Mucosa of descending colon (tissue), 3 donors: ENCODE measurements at regions of chr11 and their contacts with region 1.

Region 1: DNA sequence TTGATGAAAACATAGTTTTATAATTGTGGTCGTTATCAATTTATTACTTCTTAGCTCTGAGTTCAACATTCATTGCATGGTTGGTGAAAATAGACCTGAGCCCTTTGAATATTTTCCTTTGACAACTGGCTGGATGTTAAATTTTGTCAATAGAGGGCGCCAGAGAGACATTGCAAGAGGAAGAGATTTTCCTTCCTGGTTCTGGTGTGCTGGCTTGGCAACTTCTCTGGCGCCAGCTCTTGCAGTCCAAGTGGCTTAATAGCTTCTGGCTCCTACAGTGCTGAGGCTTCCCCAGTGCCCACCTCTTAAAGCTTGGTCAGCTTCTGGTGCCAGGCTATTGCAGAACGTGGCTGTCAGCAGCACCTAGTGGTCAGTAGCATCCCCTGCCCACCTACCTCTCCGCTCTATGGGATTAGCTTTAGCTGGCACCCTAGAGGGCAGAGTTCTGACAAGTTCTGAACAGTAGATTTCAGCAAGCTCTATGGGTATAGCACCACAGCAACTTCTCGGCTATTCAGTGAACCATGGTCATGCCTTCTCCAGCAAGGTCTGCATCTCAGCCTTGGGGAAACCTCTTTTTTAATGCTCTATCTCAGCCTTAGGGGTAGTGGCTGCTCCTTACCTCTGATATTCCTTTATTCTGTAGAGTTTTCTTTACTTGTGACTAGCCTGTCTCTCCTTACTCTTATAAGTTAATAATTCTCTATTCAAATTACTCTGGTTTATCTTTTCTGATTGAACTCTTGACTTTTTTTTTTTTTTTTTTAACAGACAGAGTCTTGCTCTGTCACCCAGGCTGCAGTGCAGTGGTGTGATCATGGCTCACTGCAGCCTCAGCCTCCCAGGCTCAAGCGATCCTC is 59.4 kb downstream of the ACER3 start:
- DNase-seq: peak; percentile 72 to 93 (median 76)
- ATAC-seq: peak; percentile 96
- H3K4me3 ChIP-seq: no peak overlapping the region
- H3K4me1 ChIP-seq: peaks cover 23% of the 10 kb centered on the region
- CTCF ChIP-seq: peak; percentile 61

Region 2: GRCh38 chr11:76734456-76735420 is 185.4 kb before region 1 on chr11:
- intact Hi-C with region 1: loop called in 1 of 2 experiments (anchors 10 kb)
- DNase-seq: no peak
- ATAC-seq: no peak
- H3K4me3 ChIP-seq: no peak overlapping the region
- H3K4me1 ChIP-seq: no peaks in the 10 kb centered on the region
- CTCF ChIP-seq: no peak

Region 3: DNA sequence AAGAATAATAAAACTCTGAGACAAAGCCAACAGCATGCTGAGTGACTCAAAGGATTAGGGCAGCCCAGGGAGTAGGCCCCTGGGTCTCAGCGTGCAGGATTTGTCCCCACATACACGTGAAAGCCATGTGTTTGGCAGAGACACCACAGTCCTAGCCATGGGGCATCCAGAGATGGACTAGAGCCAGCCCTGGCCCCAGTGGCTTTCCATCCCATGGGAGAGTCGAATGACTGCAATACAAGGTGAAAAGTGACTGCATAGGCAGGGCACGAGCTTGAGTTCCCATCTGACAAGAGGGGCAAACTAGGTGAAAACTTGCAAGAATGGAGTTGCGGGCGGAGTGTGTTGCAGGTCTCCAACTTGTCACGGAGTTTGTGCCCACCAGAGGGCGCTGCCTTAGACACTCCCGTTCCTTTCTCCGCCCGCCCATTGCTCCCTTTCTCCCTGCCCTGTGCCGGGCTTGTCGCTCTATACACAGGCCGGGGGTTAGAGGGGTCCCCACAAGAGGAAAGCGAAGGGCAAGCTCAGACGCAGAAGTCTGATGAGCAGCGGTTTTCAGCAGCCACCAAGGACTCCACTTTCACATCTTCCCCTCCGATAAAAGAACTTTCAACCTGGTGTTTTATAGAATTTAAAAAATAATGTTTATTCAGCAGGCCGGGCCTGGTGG is 112.8 kb before region 1 on chr11:
- intact Hi-C with region 1: loop called (anchors 5 kb)
- DNase-seq: peak; percentile 83 to 97 (median 88)
- ATAC-seq: peak; percentile 89
- H3K4me3 ChIP-seq: no peak overlapping the region
- H3K4me1 ChIP-seq: no peaks in the 10 kb centered on the region
- CTCF ChIP-seq: peak; percentile 67

Region 4: DNA sequence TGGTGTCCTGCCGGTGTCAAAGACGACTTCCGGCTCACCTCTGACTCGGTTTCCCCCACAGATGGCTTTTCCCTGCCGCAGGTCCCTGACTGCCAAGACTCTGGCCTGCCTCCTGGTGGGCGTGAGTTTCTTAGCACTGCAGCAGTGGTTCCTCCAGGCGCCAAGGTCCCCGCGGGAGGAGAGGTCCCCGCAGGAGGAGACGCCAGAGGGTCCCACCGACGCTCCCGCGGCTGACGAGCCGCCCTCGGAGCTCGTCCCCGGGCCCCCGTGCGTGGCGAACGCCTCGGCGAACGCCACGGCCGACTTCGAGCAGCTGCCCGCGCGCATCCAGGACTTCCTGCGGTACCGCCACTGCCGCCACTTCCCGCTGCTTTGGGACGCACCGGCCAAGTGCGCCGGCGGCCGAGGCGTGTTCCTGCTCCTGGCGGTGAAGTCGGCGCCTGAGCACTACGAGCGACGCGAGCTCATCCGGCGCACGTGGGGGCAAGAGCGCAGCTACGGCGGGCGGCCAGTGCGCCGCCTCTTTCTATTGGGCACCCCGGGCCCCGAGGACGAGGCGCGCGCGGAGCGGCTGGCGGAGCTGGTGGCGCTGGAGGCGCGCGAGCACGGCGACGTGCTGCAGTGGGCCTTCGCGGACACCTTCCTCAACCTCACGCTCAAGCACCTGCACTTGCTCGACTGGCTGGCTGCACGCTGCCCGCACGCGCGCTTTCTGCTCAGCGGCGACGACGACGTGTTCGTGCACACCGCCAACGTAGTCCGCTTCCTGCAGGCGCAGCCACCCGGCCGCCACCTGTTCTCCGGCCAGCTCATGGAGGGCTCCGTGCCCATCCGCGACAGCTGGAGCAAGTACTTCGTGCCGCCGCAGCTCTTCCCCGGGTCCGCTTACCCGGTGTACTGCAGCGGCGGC is 119.6 kb after region 1 on chr11:
- intact Hi-C with region 1: no loop called
- DNase-seq: peak in 2 of 3 donors; percentile 81 to 84
- ATAC-seq: peak; percentile 43
- H3K4me3 ChIP-seq: no peak overlapping the region
- H3K4me1 ChIP-seq: peaks cover 18% of the 10 kb centered on the region
- CTCF ChIP-seq: peak; percentile 15